Activated T-helper 1 cell treated with anti-CD3 and anti-CD28 coated beads, Interleukin-12 subunit alpha, Interleukin-12 subunit beta, Interleukin-2, Interleukin-4 antibody, amounts not matched to agents 30 ng/mL and 10 ng/mL and 1 ng/mL, durations not matched to agents 14 hours and 24 hours and 36 hours (primary cell): ENCODE measurements at regions of chr15 and their contacts with region 1.

Region 1: GRCh38 chr15:64067564-64068030 is 21.3 kb upstream of the DAPK2 start:
- DNase-seq: peak; percentile 63
- H3K4me3 Mint-ChIP-seq: no peak overlapping the region
- H3K27ac Mint-ChIP-seq: no peak overlapping the region
- H3K4me1 Mint-ChIP-seq: peaks cover 10% of the 10 kb centered on the region
- H3K27me3 Mint-ChIP-seq: no peaks in the 10 kb centered on the region

Region 2: GRCh38 chr15:63288778-63289378 is 778.7 kb before region 1 on chr15:
- intact Hi-C with region 1: loop called (anchors 5 kb)
- DNase-seq: no peak
- H3K4me3 Mint-ChIP-seq: no peak overlapping the region
- H3K27ac Mint-ChIP-seq: no peak overlapping the region
- H3K4me1 Mint-ChIP-seq: peaks cover 8% of the 10 kb centered on the region
- H3K27me3 Mint-ChIP-seq: peaks cover 3% of the 10 kb centered on the region

Region 3: GRCh38 chr15:63531586-63531985 is 536.0 kb before region 1 on chr15:
- intact Hi-C with region 1: no loop called
- DNase-seq: no peak
- H3K4me3 Mint-ChIP-seq: no peak overlapping the region
- H3K27ac Mint-ChIP-seq: no peak overlapping the region
- H3K4me1 Mint-ChIP-seq: peaks cover 59% of the 10 kb centered on the region
- H3K27me3 Mint-ChIP-seq: no peaks in the 10 kb centered on the region

Region 4: DNA sequence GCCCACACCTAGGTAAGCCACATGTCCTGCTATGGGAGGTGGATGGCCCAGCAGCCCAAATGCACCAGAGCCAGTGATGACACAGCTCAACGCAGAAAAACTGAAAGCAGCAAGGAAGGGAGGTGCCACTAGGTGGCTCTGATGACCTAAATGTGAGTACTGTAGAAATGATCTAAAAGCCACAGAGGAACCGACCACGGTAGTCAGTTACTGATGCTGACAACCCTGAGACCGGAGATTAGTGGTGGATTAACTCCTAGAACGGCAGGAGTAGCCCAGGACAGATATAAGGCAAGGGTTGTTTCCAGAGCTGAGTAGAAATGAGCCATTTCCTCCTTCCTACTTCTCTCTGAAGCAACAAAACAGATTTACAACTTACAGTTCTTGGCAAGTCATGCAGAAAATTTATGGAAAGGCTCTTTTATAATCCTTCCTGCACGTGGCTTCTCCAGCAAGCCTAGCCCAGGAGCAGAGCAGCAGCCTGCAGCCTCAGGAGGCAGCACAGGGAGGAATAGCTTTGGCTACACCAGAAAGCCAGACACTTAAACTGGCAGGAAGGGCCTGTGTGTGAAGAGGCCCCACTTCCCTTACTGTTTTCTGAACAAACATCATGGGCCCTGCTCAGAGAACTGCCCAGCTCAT is 457.3 kb before region 1 on chr15:
- intact Hi-C with region 1: loop called (anchors 1 kb)
- DNase-seq: peak; percentile 74
- H3K4me3 Mint-ChIP-seq: peak overlapping the region; percentile 38
- H3K27ac Mint-ChIP-seq: peak overlapping the region; percentile 89
- H3K4me1 Mint-ChIP-seq: peaks cover 31% of the 10 kb centered on the region
- H3K27me3 Mint-ChIP-seq: no peaks in the 10 kb centered on the region

Region 5: DNA sequence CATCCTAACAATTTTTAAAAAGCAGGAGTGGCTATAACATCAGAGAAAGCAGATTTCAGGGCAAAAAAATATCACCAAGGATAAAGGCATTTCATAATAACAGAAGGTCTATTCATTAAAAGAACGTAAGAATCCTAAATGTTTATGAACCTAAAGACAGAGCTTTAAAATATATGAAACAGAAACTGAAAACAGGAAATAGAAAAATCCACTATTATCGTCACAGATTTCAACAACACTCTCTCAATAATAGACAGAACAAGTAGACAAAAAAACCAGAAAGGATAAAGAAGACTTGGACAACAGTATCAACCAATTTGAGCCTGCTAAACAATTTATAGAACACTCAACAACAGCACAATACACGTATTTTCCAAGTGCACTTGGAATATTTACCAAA is 399.0 kb before region 1 on chr15:
- intact Hi-C with region 1: loop called (anchors 2 kb)
- DNase-seq: no peak
- H3K4me3 Mint-ChIP-seq: peak overlapping the region; percentile 68
- H3K27ac Mint-ChIP-seq: peak overlapping the region; percentile 72
- H3K4me1 Mint-ChIP-seq: peaks cover 58% of the 10 kb centered on the region
- H3K27me3 Mint-ChIP-seq: no peaks in the 10 kb centered on the region

Region 6: DNA sequence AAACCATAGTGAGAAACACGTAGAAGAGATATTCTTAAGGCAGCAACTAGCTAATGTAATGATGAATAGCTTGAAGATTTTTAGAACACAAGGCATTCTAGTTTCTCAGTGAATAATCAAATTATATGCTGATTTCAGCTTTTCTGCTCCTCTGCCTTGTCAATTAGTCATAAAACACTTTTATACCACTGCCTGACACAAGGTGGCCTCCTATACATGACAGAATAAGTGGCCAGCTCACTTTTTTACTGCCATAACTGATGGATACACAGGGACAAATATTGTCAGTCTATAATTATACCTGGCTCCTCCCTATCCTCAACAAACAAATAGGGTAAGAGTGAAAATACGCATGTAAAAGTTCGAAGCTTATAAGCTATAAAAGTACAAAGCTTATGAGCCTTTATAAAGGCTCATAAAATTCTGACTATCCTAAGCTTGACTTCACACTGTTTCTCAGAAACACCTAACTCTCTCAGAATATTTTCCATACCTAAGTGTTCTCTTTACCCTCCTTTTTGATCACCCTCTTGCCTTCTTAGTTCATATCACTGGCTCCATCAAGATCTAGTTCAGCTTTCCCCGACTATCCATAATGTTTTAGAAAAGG is 315.4 kb before region 1 on chr15:
- intact Hi-C with region 1: loop called (anchors 1 kb)
- DNase-seq: peak; percentile 21
- H3K4me3 Mint-ChIP-seq: no peak overlapping the region
- H3K27ac Mint-ChIP-seq: no peak overlapping the region
- H3K4me1 Mint-ChIP-seq: peaks cover 9% of the 10 kb centered on the region
- H3K27me3 Mint-ChIP-seq: no peaks in the 10 kb centered on the region

Region 7: DNA sequence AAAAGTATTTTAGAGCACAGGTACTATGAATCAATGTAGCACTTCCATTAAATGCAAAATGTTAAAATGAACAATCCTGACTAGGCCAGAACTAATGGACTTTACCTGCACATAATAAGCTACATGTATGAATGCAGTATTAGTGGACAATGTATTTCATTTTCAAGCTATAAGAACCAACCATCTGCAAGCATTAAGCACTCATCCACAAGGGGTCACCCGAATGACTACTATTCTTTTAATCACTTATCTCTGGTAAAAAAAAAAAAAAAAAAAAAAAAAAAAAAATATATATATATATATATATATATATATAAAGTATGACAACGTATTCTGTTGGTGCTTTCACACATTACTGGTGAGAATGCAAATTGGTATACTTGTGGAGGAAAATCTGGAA is 241.1 kb before region 1 on chr15:
- intact Hi-C with region 1: loop called (anchors 2 kb)
- DNase-seq: no peak
- H3K4me3 Mint-ChIP-seq: peak overlapping the region; percentile 51
- H3K27ac Mint-ChIP-seq: no peak overlapping the region
- H3K4me1 Mint-ChIP-seq: peaks cover 63% of the 10 kb centered on the region
- H3K27me3 Mint-ChIP-seq: no peaks in the 10 kb centered on the region

Region 8: DNA sequence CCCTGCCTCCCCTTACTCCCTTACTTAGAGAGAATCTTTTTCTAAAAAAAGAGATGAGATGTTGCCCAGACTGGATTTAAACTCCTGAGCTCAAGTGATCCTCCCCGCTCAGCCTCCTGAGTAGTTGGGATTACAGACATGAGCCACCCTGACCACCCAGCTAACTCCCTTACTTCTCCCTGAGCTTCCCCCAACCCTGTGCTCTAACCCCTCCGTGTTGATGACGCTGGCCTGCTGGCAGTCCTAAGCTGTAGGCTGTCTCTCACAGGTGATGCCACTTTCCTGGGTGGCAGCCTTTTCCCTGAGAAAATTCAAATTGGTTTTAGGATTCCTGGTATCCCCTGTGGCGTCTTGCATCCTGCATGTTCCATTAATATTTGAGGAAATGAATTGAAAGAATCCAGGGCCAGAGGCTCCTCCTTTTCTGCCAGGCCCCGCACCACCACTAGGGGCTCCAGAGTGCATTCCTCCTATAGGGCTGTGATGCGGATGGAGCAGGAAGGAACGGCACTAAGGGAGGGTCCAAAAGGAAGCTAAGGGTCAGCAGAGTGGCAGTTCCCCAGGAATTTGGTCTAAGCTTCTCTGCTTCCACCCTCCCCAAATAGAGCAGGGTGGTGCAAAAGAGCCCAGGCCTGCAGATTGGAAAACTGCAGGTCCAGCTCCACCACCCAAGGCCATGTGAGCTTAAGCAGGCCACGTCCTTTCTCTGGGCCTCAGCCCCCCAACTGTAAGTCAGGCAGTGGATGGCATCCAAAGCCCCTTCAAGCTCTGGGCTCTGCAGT is 122.4 kb before region 1 on chr15:
- intact Hi-C with region 1: loop called (anchors 5 kb)
- DNase-seq: peak; percentile 51
- H3K4me3 Mint-ChIP-seq: no peak overlapping the region
- H3K27ac Mint-ChIP-seq: peak overlapping the region; percentile 52
- H3K4me1 Mint-ChIP-seq: peaks cover 47% of the 10 kb centered on the region
- H3K27me3 Mint-ChIP-seq: no peaks in the 10 kb centered on the region

Region 9: GRCh38 chr15:64112904-64113303 is 45.3 kb after region 1 on chr15:
- intact Hi-C with region 1: no loop called
- DNase-seq: no peak
- H3K4me3 Mint-ChIP-seq: no peak overlapping the region
- H3K27ac Mint-ChIP-seq: no peak overlapping the region
- H3K4me1 Mint-ChIP-seq: peaks cover 27% of the 10 kb centered on the region
- H3K27me3 Mint-ChIP-seq: peaks cover 2% of the 10 kb centered on the region

Region 10: DNA sequence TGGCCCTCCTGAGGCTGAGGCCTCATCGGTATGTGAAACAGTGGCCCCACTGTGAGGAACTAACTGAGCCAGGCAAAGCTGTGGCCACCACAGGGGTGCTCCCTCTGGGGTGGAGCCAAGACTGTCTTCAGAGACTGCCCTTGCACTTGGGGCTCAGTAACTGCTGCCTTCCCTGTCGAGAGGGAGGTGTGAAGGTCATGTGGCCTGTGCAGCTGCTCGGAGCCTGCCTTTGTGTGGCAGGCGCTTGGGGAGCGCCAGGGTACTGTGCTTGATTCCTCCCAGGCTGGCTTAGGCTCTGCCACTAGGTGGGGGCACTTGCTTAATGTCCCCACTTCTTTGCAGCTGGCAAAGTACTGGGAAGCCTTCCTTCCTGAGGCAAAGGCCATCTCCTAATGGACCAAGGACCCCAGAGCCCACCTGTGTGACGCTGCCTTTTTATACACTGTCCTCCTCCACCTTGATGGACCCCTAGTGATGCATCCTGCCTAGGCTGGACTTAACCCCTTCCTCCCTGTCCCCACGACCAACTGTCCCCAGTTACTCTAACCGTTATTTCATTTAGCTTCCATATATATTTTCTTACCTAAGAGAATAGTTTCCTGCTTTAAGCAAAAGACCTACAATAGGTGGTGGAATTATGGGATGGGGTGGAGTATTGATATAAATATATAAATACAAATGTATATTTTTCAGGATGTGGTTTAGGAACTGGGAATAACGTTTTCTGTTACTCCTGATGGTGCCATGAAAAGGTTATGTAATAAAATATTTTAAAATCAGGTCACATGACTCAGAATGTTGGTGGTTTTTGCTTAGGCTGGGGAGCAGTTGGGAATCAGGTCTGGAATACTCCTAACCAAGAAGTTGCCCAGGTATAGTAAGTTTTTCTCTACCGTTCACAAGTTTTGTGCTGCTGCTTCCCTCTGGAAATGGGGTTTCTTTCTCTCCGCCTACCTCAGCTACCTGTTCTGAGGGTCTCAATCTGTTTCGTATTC is 69.9 kb after region 1 on chr15:
- intact Hi-C with region 1: no loop called
- DNase-seq: no peak
- H3K4me3 Mint-ChIP-seq: no peak overlapping the region
- H3K27ac Mint-ChIP-seq: no peak overlapping the region
- H3K4me1 Mint-ChIP-seq: no peaks in the 10 kb centered on the region
- H3K27me3 Mint-ChIP-seq: no peaks in the 10 kb centered on the region